Naive thymus-derived CD4-positive, alpha-beta T cell (primary cell): ENCODE measurements at regions of chr7 and their contacts with region 1.

Region 1: DNA sequence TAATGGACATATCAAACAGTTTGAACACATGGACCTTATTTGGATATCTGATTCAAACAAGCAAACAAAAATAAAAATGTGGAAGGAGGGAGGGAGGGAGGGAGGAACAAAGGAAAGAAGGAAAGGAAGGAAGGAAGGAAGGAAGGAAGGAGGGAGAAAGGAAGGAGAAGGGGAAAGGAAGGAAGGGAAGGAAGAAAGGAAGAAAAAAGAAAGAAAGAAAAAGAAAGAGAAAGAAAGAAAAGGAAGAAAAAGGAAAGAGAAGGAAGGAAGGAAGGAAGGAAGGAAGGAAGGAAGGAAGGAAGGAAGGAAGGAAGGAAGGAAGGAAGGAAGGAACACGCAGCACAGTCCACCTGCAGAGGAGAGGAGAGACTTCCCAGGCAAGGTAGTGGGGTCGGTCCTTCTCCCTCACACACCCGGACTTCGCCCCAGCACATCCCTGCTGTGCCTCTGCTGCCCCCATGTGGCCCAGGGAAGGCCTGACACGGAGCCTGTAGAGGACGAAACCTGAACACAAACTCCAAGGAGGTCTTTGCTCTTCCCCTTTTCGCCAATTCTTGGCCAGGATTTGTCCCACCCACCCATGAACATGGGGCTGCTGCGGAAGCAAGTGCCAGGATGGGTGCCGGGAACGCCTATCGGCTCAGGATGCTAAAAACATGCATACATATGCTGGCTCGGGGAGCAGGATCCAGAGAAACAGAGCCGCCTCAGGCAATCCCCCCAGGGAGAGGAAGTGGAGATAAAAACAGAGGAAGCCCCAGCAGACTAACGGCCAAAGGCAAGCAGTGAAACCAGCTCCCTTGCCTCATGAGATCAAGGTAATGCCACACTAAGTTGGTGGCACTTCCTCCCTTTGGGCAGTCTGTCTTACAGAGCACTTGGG is 52.3 kb upstream of the DGKI start:
- DNase-seq: peak; percentile 46 to 81 (median 68)
- ATAC-seq: peak; percentile 92
- H3K4me3 ChIP-seq: no peak overlapping the region
- H3K4me3 Mint-ChIP-seq: peak overlapping the region; percentile 51 to 82 (median 66)
- H3K27ac ChIP-seq: no peak overlapping the region
- H3K27ac Mint-ChIP-seq: peak overlapping the region in 8 of 9 donors; percentile 19 to 72 (median 62)
- H3K4me1 ChIP-seq: peaks cover 0 to 6% of the 10 kb centered on the region in 2 donors
- H3K4me1 Mint-ChIP-seq: peaks cover 10 to 36% (median 16%) of the 10 kb centered on the region in 7 donors
- H3K27me3 ChIP-seq: no peaks in the 10 kb centered on the region
- H3K27me3 Mint-ChIP-seq: no peaks in the 10 kb centered on the region

Region 2: DNA sequence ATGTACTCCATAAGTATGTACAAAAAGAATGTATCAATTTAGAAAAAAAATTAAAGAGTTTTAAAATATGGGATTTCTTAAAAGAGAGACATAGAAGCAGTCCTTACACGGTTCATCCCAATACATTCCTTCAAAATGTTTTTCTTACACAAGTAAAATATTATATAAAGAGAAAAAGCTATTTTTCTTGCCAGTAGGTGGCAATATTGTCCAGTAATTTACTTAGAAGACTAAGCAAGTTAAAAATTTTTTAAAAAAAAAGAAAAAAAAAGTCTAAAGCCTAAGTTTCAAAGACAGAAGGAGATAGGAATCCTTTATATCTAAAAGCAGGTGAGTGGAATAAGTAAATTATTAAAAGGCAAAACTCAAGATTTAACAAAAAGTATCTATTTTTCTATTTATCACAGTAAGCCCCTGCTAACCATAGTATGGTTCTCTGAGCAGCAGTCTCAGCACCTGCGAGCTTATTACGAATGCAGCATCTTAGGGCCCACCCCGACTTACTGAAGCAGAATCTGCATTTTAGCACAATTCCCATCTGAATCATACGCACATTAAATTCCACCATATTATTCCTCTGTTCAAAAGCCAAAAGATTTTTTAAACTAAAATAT is 292.9 kb before region 1 on chr7:
- CTCF ChIA-PET with region 1: interaction called, 3 read pairs
- POLR2A ChIA-PET with region 1: no interaction called
- intact Hi-C with region 1: loop called (anchors 1 kb)
- DNase-seq: peak in 4 of 9 donors; percentile 3 to 14 (median 6)
- ATAC-seq: no peak
- H3K4me3 ChIP-seq: no peak overlapping the region
- H3K4me3 Mint-ChIP-seq: no peak overlapping the region
- H3K27ac ChIP-seq: no peak overlapping the region
- H3K27ac Mint-ChIP-seq: no peak overlapping the region
- H3K4me1 ChIP-seq: no peaks in the 10 kb centered on the region
- H3K4me1 Mint-ChIP-seq: no peaks in the 10 kb centered on the region
- H3K27me3 ChIP-seq: peaks cover 0 to 3% of the 10 kb centered on the region in 2 donors
- H3K27me3 Mint-ChIP-seq: peaks cover 3 to 27% (median 25%) of the 10 kb centered on the region in 5 donors

Region 3: GRCh38 chr7:137934941-137935883 is 36.1 kb after region 1 on chr7:
- CTCF ChIA-PET with region 1: interaction called, 4 read pairs
- POLR2A ChIA-PET with region 1: no interaction called
- intact Hi-C with region 1: loop called (anchors 1 to 5 kb)
- DNase-seq: peak in 6 of 9 donors; percentile 12 to 52 (median 35)
- ATAC-seq: peak; percentile 80
- H3K4me3 ChIP-seq: peak overlapping the region; percentile 45
- H3K4me3 Mint-ChIP-seq: peak overlapping the region; percentile 68 to 92 (median 86)
- H3K27ac ChIP-seq: peak overlapping the region; percentile 70
- H3K27ac Mint-ChIP-seq: peak overlapping the region; percentile 89 to 99 (median 96)
- H3K4me1 ChIP-seq: peaks cover 12 to 20% of the 10 kb centered on the region in 2 donors
- H3K4me1 Mint-ChIP-seq: peaks cover 31 to 50% (median 42%) of the 10 kb centered on the region in 7 donors
- H3K27me3 ChIP-seq: no peaks in the 10 kb centered on the region
- H3K27me3 Mint-ChIP-seq: no peaks in the 10 kb centered on the region

Region 4: GRCh38 chr7:138008547-138009349 is 109.7 kb after region 1 on chr7:
- CTCF ChIA-PET with region 1: interaction called, 198 read pairs
- POLR2A ChIA-PET with region 1: interaction called, 4 read pairs
- intact Hi-C with region 1: loop called (anchors 1 kb)
- DNase-seq: peak in 7 of 9 donors; percentile 20 to 63 (median 52)
- ATAC-seq: peak; percentile 80
- H3K4me3 ChIP-seq: no peak overlapping the region
- H3K4me3 Mint-ChIP-seq: no peak overlapping the region
- H3K27ac ChIP-seq: no peak overlapping the region
- H3K27ac Mint-ChIP-seq: peak overlapping the region in 1 of 9 donors; percentile 20
- H3K4me1 ChIP-seq: peaks cover 0 to 3% of the 10 kb centered on the region in 2 donors
- H3K4me1 Mint-ChIP-seq: peaks cover 3 to 13% (median 10%) of the 10 kb centered on the region in 7 donors
- H3K27me3 ChIP-seq: no peaks in the 10 kb centered on the region
- H3K27me3 Mint-ChIP-seq: peaks cover 0 to 6% (median 0%) of the 10 kb centered on the region in 5 donors

Region 5: DNA sequence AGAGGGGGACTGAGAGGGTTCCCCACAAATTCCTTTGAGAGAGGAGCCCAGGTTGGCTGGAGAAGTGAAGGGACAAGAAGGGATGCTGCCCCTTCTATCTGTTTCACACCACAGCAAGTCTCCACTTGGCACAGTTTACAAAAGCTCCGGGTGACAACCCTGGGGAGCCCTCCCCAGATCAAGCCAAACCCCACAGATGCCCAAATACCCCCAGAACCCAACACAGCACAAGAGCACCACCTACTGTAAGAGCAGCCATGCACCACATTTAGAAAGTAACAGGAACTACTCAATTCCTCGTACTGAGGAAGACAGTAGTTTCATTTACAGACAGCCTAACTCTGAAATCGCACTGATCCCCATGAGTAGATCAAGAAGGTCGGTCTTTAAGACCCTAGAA is 966.8 kb after region 1 on chr7:
- CTCF ChIA-PET with region 1: no interaction called
- POLR2A ChIA-PET with region 1: no interaction called
- intact Hi-C with region 1: loop called (anchors 1 kb)
- DNase-seq: peak in 8 of 9 donors; percentile 21 to 62 (median 49)
- ATAC-seq: peak; percentile 84
- H3K4me3 ChIP-seq: no peak overlapping the region
- H3K4me3 Mint-ChIP-seq: no peak overlapping the region
- H3K27ac ChIP-seq: no peak overlapping the region
- H3K27ac Mint-ChIP-seq: peak overlapping the region in 7 of 9 donors; percentile 0 to 69 (median 40)
- H3K4me1 ChIP-seq: no peaks in the 10 kb centered on the region
- H3K4me1 Mint-ChIP-seq: peaks cover 0 to 18% (median 7%) of the 10 kb centered on the region in 7 donors
- H3K27me3 ChIP-seq: no peaks in the 10 kb centered on the region
- H3K27me3 Mint-ChIP-seq: peaks cover 0 to 4% (median 2%) of the 10 kb centered on the region in 5 donors